IMR-90 (cell line): ENCODE measurements at regions of chr7 and their contacts with region 1.

Region 1: DNA sequence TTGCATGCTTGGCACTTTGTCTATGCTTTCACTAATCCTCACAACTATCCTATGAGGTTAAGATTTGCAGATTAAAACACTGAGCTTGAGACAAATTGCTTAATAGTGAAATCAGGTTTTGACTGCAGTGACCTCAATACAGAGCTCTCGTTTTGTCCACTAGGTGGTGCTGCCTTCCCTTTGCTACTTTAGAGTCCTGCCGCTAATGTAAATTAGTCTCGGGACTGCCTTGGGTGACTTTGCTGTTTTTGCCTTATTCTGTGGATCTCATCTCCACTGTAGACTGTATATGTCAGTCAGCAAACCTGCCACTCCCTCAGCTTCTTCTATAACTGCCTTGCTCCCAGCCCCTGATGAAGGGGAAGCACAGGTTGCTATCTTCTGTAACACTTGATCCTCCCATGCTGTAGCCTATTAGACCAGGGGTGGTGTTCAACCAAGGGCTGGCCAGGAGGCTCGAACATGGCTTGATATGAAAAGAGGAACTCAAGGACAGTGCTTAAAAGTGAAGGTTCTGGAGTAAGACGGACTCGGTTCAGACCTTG is 26.0 kb downstream of the ASB4 start:
- DNase-seq: peak; percentile 63
- ATAC-seq: peak; percentile 95
- H3K4me3 ChIP-seq: no peak overlapping the region
- H3K27ac ChIP-seq: no peak overlapping the region
- H3K4me1 ChIP-seq: no peaks in the 10 kb centered on the region
- H3K27me3 ChIP-seq: peaks cover 6% of the 10 kb centered on the region
- CTCF ChIP-seq: peak; percentile 85
- POLR2A ChIP-seq: no peak
- RAD21 ChIP-seq: peak; percentile 61

Region 2: DNA sequence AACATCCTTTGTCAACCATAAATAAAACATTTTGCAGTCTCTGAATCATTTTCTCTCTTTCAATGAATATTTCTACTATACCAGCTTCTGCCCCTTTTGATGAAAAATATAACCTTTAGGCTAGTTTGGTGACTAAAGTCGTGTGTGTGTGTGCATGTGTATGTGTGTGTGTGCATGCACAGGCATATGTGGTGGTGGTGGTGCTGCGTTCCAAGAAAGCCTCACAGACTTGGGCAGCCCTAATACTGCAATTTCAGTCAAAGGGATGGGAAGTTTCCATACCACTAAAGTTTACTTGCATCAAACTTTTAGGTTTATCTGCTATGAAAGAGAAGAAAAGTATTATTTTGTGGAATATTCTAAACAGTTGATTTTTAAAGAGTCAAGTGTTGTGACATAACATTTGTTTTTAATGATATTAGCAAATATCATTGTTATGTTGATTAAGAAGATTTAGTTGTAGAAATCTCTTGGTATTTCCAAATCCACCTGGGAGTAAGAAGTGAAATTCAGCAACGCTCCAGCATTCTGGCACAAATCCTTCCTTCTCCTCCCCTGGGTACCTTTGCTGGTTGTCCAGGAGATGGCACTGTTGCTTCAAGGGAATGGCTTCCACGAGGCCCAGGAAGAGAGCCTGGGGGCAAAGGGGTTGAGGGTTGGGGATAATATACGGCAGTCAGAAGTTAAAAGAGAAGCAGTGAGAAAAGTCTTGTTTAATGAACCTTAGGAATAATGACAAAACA is 15.4 kb after region 1 on chr7:
- CTCF ChIA-PET with region 1: interaction called, 10 read pairs
- POLR2A ChIA-PET with region 1: no interaction called
- dilution Hi-C with region 1: no loop called
- in situ Hi-C with region 1: no loop called
- intact Hi-C with region 1: no loop called
- DNase-seq: peak; percentile 44
- ATAC-seq: peak; percentile 91
- H3K4me3 ChIP-seq: no peak overlapping the region
- H3K27ac ChIP-seq: no peak overlapping the region
- H3K4me1 ChIP-seq: no peaks in the 10 kb centered on the region
- H3K27me3 ChIP-seq: peaks cover 11% of the 10 kb centered on the region
- CTCF ChIP-seq: peak; percentile 86
- POLR2A ChIP-seq: no peak
- RAD21 ChIP-seq: peak; percentile 80

Region 3: GRCh38 chr7:95684037-95684436 is 172.2 kb after region 1 on chr7:
- CTCF ChIA-PET with region 1: interaction called, 111 read pairs
- POLR2A ChIA-PET with region 1: no interaction called
- dilution Hi-C with region 1: loop called (anchors 25 kb)
- in situ Hi-C with region 1: no loop called
- intact Hi-C with region 1: loop called (anchors 2 kb)
- DNase-seq: peak; percentile 30
- ATAC-seq: peak; percentile 74
- H3K4me3 ChIP-seq: no peak overlapping the region
- H3K27ac ChIP-seq: no peak overlapping the region
- H3K4me1 ChIP-seq: no peaks in the 10 kb centered on the region
- H3K27me3 ChIP-seq: peaks cover 2% of the 10 kb centered on the region; the same call in 1 of the 2 replicates
- CTCF ChIP-seq: peak; percentile 64
- POLR2A ChIP-seq: no peak
- RAD21 ChIP-seq: peak; percentile 57

Region 4: GRCh38 chr7:95690367-95690947 is 178.7 kb after region 1 on chr7:
- CTCF ChIA-PET with region 1: interaction called, 111 read pairs
- POLR2A ChIA-PET with region 1: no interaction called
- dilution Hi-C with region 1: loop called (anchors 25 kb)
- in situ Hi-C with region 1: loop called (anchors 10 kb)
- intact Hi-C with region 1: loop called (anchors 1 kb)
- DNase-seq: peak; percentile 41
- ATAC-seq: peak; percentile 78
- H3K4me3 ChIP-seq: no peak overlapping the region
- H3K27ac ChIP-seq: no peak overlapping the region
- H3K4me1 ChIP-seq: no peaks in the 10 kb centered on the region
- H3K27me3 ChIP-seq: peaks cover 2% of the 10 kb centered on the region; the same call in 1 of the 2 replicates
- CTCF ChIP-seq: peak; percentile 49
- POLR2A ChIP-seq: no peak
- RAD21 ChIP-seq: peak; percentile 37